ENCODE measurements at regions of chr3 and their contacts with region 1.

Region 1: GRCh38 chr3:44913868-44914468 is 39.6 kb downstream of the TGM4 start:
- DNase-seq: peak; percentile 57 to 86 (median 78)
- ATAC-seq: peak; percentile 51 to 72
- H3K4me3 ChIP-seq: no peak overlapping the region
- H3K27ac ChIP-seq: no peak overlapping the region
- H3K4me1 ChIP-seq: no peaks in the 10 kb centered on the region
- H3K27me3 ChIP-seq: no peaks in the 10 kb centered on the region

Region 2: GRCh38 chr3:44529927-44530326 is 384.0 kb before region 1 on chr3:
- intact Hi-C with region 1: loop called in 3 of 4 experiments (anchors 5 kb)
- DNase-seq: no peak
- ATAC-seq: no peak
- H3K4me3 ChIP-seq: no peak overlapping the region
- H3K27ac ChIP-seq: no peak overlapping the region
- H3K4me1 ChIP-seq: no peaks in the 10 kb centered on the region
- H3K27me3 ChIP-seq: no peaks in the 10 kb centered on the region

Region 3: GRCh38 chr3:44966750-44967278 is 52.8 kb after region 1 on chr3:
- intact Hi-C with region 1: no loop called
- DNase-seq: no peak
- ATAC-seq: no peak
- H3K4me3 ChIP-seq: no peak overlapping the region
- H3K27ac ChIP-seq: no peak overlapping the region
- H3K4me1 ChIP-seq: peaks cover 14% of the 10 kb centered on the region
- H3K27me3 ChIP-seq: no peaks in the 10 kb centered on the region

Measured in right cardiac atrium (tissue), 5 donors.